ENCODE measurements at regions of chr2 and their contacts with region 1.

Region 1: DNA sequence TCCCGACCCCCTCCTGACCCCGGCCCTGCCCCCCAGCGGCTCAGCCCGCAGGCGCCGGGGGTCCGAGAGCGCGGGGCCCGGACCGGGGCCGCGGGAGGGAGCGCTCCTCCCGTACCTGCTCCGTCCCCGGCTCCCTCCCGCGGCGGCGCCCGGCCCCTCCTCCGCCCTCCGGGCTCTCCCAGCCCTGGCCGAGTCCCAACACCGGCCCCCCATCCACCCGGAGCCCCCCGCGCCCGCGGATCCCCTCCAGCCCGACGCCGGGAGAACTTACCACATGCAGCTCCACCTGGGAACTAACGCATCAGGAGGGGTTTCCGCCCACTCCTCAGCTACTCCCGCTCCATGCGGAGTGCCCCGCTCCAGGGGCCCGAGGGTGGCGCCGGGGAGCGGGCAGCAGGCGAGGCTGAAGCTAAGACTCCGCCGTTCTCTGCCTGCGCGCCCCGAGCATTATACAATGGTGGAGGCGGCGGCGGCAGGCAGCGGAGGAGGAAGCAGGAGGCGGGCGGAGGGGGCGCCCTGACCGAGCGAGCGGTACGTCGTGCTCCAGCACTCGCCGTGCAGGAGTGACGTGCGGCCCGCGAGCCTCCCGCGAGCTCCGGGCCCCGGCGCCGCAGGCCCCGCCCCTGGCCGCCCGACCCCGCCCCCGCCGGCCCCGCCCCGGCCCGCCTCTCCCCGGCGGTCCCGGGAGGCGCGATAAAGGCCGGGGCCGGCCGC is at the start of gene SERTAD2:
- DNase-seq: peak; percentile 86 to 87
- H3K4me3 ChIP-seq: peak within 1 kb of the TSS; percentile 95 to 97 (median 97)
- H3K27ac ChIP-seq: peak within 1 kb of the TSS; percentile 99 to 100
- H3K4me1 ChIP-seq: peaks cover 0 to 21% of the 10 kb centered on the region in 2 donors
- H3K27me3 ChIP-seq: no peaks in the 10 kb centered on the region
- CTCF ChIP-seq: peak in 2 of 3 donors; percentile 15 to 39
- POLR2A ChIP-seq: peak; percentile 77
- total RNA-seq, gene SERTAD2: 12.8 to 20.0 (median 17.0) TPM

Region 2: DNA sequence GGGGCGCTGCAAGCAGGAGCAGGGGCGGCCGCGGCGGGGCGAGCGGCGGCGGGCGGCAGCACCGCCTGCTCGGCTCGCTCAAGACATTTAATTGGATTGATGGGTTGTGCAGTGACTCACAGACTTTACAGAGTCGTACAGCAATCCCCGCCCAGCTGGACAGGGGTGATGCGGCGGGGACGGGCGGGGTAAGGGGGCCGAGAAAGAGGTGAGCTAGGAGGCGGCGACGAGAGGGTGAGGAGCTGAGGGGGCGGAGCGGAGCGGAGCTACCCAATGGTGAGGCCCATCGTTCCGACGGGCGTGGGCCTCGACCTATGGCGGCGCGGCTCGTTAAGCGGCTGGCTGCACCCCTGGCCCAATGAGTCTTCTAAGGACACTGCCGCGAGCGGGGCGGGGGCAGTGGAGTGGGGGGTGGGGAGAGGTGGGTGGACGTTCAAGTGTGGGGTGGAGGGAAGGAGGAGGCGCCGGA is 97.3 kb after region 1 on chr2:
- intact Hi-C with region 1: loop called (anchors 5 kb)
- DNase-seq: peak; percentile 98 to 99
- H3K4me3 ChIP-seq: peak overlapping the region; percentile 71 to 96 (median 80)
- H3K27ac ChIP-seq: peak overlapping the region; percentile 94 to 100
- H3K4me1 ChIP-seq: peaks cover 0 to 5% of the 10 kb centered on the region in 2 donors
- H3K27me3 ChIP-seq: no peaks in the 10 kb centered on the region
- CTCF ChIP-seq: no peak
- POLR2A ChIP-seq: peak; percentile 89

Region 3: DNA sequence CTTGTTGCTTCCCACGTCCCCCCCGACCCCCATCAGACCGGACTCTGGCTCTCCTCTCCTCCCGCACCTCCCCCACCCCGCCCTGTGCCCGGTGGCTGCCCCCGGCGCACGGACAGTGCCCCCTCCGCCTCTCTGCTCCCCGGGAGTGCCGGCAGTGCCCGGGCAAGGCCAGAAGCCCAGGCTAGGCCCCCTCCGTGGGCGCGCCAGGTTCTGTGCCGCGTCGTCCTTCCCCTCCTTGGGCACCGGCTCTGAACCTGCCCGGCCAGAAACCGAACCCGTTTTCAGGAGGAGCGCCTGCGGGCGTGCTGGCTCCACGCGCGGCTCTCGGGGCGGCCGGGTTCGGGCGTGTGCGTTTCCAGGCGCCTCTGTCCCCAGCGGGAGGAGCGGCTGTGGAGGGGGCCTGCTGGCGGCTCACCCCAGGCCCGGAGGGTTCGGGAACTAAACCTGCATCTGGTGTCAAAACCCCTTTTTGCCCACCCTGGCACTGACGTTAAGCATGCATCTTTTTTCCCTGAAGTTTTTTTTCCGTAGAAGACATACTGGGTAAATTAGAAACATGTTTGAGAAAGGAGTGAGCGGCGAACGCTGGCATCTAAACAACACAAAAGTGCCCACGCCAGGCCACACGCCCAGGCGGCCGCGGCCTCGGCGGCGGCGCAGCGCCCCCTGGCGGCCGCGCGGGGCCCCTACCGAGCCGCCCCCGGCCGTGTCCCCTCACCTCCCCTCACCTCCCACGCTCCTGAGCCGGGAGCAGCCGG is 211.7 kb after region 1 on chr2:
- intact Hi-C with region 1: loop called (anchors 5 kb)
- DNase-seq: peak; percentile 65 to 76
- H3K4me3 ChIP-seq: peak overlapping the region; percentile 62 to 82 (median 63)
- H3K27ac ChIP-seq: peak overlapping the region; percentile 91 to 92
- H3K4me1 ChIP-seq: peaks cover 0 to 13% of the 10 kb centered on the region in 2 donors
- H3K27me3 ChIP-seq: no peaks in the 10 kb centered on the region
- CTCF ChIP-seq: peak in 2 of 3 donors; percentile 45 to 99
- POLR2A ChIP-seq: no peak

Measured in breast epithelium (tissue), 4 donors.